ENCODE measurements at regions of chr1 and their contacts with region 1.

Region 1: DNA sequence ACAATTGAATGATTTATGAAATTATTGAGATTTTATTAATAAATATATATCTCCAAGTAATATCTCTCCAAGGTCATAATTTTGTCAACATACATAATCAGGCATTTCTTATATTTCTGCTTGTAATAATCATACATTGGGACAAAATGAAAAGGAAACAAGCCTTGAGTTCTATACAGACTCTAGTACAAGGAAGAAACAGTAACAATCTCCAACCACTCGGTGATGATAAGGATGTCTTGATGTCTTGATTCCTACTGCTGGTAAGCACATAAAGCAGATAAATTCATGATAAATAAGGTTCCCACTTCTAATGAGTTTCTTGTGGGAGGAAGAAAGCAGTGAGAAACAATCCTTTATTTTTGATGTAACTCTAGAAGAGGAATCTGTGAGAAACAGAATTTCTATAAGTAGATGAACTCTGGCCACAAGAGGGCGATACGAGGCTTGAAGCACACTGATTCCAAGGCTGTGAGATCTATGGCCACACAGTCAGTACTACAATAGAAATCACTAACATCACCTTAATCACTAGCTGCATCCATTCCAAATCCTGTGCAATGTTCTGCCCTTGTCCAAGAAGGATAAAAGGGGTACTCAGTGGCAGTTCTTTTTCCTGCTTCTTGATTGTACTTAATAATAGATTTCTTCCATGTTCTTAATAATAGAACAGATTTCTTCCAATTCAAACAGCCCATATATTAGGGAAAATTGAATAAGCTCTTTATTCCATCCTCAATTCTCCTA is 41.4 kb upstream of the LRRC8B start:
- DNase-seq: peak; percentile 79
- H3K4me3 Mint-ChIP-seq: no peak overlapping the region
- H3K27ac Mint-ChIP-seq: no peak overlapping the region
- H3K4me1 Mint-ChIP-seq: no peaks in the 10 kb centered on the region
- H3K27me3 Mint-ChIP-seq: no peaks in the 10 kb centered on the region
- CTCF ChIP-seq: peak; percentile 58

Region 2: DNA sequence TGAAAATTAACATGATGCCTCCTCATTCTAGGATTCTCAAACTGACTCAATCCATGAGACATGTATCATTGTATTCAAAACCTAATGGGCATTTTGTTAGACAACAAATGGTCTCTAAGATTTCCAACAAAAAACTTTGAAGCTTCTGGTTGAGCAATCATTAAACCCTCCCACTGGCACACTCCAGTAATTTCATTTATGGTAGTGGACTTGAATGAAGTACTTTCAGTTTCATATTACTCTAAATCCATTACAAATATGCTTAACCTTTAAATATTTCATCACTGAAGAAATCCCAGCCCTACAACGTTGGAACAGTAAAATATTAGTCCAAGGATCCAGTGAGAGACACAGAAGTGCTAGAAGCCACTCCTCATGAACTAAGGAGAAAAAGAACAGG is 75.8 kb before region 1 on chr1:
- CTCF ChIA-PET with region 1: no interaction called
- POLR2A ChIA-PET with region 1: no interaction called
- intact Hi-C with region 1: no loop called
- DNase-seq: peak; percentile 38
- H3K4me3 Mint-ChIP-seq: peak overlapping the region; percentile 66
- H3K27ac Mint-ChIP-seq: no peak overlapping the region
- H3K4me1 Mint-ChIP-seq: no peaks in the 10 kb centered on the region
- H3K27me3 Mint-ChIP-seq: no peaks in the 10 kb centered on the region
- CTCF ChIP-seq: no peak

Region 3: DNA sequence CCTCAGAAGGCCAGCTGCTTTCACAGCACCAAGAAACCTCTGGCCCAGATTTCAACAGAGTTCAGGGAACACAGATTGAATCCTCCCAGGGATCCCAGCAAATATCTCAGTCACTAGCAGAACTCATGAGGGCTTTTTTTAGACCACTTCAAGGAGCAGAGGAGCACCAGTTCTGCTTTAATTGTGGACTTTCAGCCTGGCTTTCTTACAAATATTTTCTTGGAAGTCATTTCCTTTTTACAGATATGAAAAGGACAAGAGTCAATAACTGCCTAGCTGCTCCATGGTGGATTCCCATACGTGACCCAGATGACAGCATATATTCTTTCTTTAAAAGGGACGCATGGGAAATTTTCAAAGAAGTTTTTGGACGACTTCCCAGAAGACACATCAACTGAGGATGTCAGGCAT is 35.0 kb after region 1 on chr1:
- CTCF ChIA-PET with region 1: interaction called, 11 read pairs
- POLR2A ChIA-PET with region 1: no interaction called
- intact Hi-C with region 1: no loop called
- DNase-seq: no peak
- H3K4me3 Mint-ChIP-seq: no peak overlapping the region
- H3K27ac Mint-ChIP-seq: no peak overlapping the region
- H3K4me1 Mint-ChIP-seq: peaks cover 10% of the 10 kb centered on the region
- H3K27me3 Mint-ChIP-seq: no peaks in the 10 kb centered on the region
- CTCF ChIP-seq: no peak

Region 4: GRCh38 chr1:89605692-89606091 is 122.5 kb after region 1 on chr1:
- CTCF ChIA-PET with region 1: interaction called, 53 read pairs
- POLR2A ChIA-PET with region 1: no interaction called
- intact Hi-C with region 1: no loop called
- DNase-seq: peak; percentile 92
- H3K4me3 Mint-ChIP-seq: peak overlapping the region; percentile 32
- H3K27ac Mint-ChIP-seq: no peak overlapping the region
- H3K4me1 Mint-ChIP-seq: peaks cover 35% of the 10 kb centered on the region
- H3K27me3 Mint-ChIP-seq: no peaks in the 10 kb centered on the region
- CTCF ChIP-seq: no peak

Region 5: GRCh38 chr1:89632657-89633247 is 149.6 kb after region 1 on chr1 and contains the start of gene LRRC8C:
- CTCF ChIA-PET with region 1: interaction called, 11 read pairs
- POLR2A ChIA-PET with region 1: no interaction called
- intact Hi-C with region 1: no loop called
- DNase-seq: peak; percentile 59
- H3K4me3 Mint-ChIP-seq: peak within 1 kb of the TSS; percentile 85
- H3K27ac Mint-ChIP-seq: peak within 1 kb of the TSS; percentile 57
- H3K4me1 Mint-ChIP-seq: peaks cover 18% of the 10 kb centered on the region
- H3K27me3 Mint-ChIP-seq: no peaks in the 10 kb centered on the region
- CTCF ChIP-seq: peak; percentile 40
- total RNA-seq, gene LRRC8C: 4.4 TPM in 2 replicates

Region 6: GRCh38 chr1:89987170-89987819 is 504.1 kb after region 1 on chr1:
- CTCF ChIA-PET with region 1: no interaction called
- POLR2A ChIA-PET with region 1: no interaction called
- intact Hi-C with region 1: loop called (anchors 1 kb)
- DNase-seq: peak; percentile 81
- H3K4me3 Mint-ChIP-seq: no peak overlapping the region
- H3K27ac Mint-ChIP-seq: no peak overlapping the region
- H3K4me1 Mint-ChIP-seq: peaks cover 12% of the 10 kb centered on the region
- H3K27me3 Mint-ChIP-seq: no peaks in the 10 kb centered on the region
- CTCF ChIP-seq: peak; percentile 84

Measured in MCF 10A (cell line).